ENCODE measurements at regions of chr3 and their contacts with region 1.

Region 1: DNA sequence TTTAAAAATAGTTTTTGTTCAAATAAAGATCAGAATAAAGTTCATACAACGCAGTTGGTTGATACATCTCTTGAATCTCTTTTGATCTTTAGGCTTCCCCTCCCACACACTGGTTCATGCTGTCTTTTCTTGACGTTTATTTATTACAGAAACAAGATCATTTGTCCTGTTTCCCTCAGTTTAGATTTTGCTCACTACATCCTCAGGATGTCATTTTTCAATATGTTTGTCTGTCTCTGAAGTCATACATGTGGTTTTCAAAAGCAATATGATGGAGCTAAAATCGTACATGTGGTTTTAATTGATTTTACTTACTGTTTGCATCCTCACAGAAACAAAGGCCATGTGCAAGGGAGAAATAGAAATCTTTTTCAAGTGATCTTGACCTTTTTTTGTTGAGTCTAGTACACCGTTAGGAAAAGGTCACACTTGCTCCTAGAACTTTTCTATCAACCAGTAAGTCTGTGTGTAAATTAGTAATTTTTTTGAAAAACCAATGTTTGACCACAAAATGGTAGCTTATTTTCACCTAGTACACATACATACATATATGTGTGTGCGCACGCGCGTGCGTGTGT is 63.7 kb upstream of the SENP5 start:
- DNase-seq: peak in 4 of 35 experiments; percentile 7 to 28 (median 10)
- ATAC-seq: peak in 1 of 4 experiments; percentile 88
- H3K4me3 ChIP-seq: no peak overlapping the region
- H3K4me3 Mint-ChIP-seq: no peak overlapping the region
- H3K27ac ChIP-seq: no peak overlapping the region
- H3K27ac Mint-ChIP-seq: peak overlapping the region; percentile 54 to 73
- H3K4me1 ChIP-seq: peaks cover 0 to 12% of the 10 kb centered on the region in 2 experiments
- H3K4me1 Mint-ChIP-seq: peaks cover 13 to 20% (median 18%) of the 10 kb centered on the region in 3 donors
- H3K27me3 ChIP-seq: no peaks in the 10 kb centered on the region
- H3K27me3 Mint-ChIP-seq: no peaks in the 10 kb centered on the region

Region 2: GRCh38 chr3:196323701-196324100 is 480.3 kb before region 1 on chr3:
- CTCF ChIA-PET with region 1: no interaction called
- POLR2A ChIA-PET with region 1: no interaction called
- DNase-seq: no peak
- ATAC-seq: no peak
- H3K4me3 ChIP-seq: no peak overlapping the region
- H3K4me3 Mint-ChIP-seq: no peak overlapping the region
- H3K27ac ChIP-seq: no peak overlapping the region
- H3K27ac Mint-ChIP-seq: no peak overlapping the region
- H3K4me1 ChIP-seq: peaks cover 0 to 6% of the 10 kb centered on the region in 2 experiments
- H3K4me1 Mint-ChIP-seq: peaks cover 0 to 6% (median 3%) of the 10 kb centered on the region in 3 donors
- H3K27me3 ChIP-seq: no peaks in the 10 kb centered on the region
- H3K27me3 Mint-ChIP-seq: peaks cover 0 to 3% of the 10 kb centered on the region in 2 donors

Region 3: DNA sequence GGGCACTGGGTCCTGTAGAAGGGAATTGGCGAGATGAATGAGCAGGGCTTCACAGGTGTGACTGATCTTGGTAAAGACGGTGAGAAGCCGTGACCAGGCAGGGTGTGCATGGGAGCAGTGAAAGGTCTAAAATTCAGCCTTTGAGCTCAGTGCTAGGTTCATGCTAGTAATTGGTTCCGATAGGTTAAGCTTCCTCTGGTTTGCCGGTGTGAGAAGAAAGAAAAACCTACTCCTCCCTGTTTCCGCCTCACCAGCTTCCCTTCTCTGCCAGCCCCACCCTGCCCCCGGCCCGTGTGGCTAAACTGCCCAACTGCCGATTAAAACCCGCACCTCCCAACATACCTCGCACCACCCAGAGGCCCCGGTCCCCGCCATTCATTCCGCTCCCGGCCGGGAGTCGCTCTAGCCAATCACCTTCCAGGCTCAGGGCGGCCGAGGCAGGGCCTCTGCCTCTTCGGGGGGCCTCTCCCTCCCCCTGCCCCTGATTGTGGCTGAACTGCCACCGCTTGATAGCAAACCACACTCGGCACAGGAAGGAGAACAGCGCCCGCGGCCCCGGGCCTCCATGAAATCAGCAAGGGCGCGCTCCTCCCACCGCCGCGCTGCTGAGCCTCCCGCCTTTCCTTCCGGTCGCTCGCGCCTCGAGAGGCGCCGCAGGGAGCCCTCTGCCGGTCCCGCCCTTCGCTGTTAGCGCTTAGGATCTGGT is 171.8 kb before region 1 on chr3:
- CTCF ChIA-PET with region 1: no interaction called
- POLR2A ChIA-PET with region 1: interaction called in 1 of 2 experiments, 10 read pairs
- DNase-seq: peak; percentile 79 to 94 (median 88)
- ATAC-seq: peak; percentile 86 to 89 (median 88)
- H3K4me3 ChIP-seq: peak overlapping the region; percentile 38 to 66
- H3K4me3 Mint-ChIP-seq: peak overlapping the region; percentile 81 to 88 (median 86)
- H3K27ac ChIP-seq: peak overlapping the region; percentile 78
- H3K27ac Mint-ChIP-seq: peak overlapping the region; percentile 95 to 98
- H3K4me1 ChIP-seq: peaks cover 35 to 77% of the 10 kb centered on the region in 2 experiments
- H3K4me1 Mint-ChIP-seq: peaks cover 56 to 64% (median 63%) of the 10 kb centered on the region in 3 donors
- H3K27me3 ChIP-seq: no peaks in the 10 kb centered on the region
- H3K27me3 Mint-ChIP-seq: no peaks in the 10 kb centered on the region

Region 4: DNA sequence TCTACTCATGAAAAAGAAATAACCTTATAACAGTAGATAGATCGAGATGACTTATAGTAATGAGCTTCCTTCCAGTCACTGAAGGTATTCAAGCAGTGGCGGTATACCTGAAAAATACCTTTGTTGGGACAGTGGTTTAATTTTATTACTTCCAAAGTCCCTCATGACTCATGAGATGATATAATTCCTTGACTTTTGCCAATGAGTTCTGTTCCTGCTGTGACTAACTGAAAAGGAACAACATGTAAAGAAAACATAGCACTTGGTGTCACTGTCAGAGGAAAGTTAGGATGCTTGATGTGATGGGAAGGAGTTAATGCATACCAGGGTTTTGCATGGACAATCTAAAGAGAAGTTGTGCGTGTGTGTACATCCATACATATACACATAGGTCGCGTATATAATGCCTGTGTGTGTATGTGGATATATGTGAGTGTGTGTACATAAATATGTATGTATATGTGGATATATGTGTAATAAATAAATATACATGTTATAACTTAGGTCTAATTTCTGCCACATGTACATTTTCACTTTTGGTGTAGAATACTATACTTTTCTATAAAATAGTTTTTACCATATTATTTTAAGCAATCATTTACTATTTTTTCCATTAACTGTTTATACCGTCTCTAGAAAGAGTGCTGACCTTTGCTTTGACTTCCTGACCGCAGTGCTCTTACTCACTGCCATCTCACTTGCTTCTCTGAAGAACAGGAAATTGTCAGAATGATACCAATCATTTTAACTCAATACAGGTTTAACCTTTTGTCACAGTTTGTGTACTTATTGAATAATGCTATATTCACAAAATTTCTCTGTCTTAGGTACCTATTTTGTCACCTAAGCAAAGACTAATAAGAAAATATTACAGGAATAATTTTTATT is 76.9 kb before region 1 on chr3:
- CTCF ChIA-PET with region 1: no interaction called
- POLR2A ChIA-PET with region 1: interaction called in 1 of 2 experiments, 10 read pairs
- DNase-seq: peak in 1 of 35 experiments; percentile 24
- ATAC-seq: peak in 3 of 4 experiments; percentile 69 to 87 (median 70)
- H3K4me3 ChIP-seq: no peak overlapping the region
- H3K4me3 Mint-ChIP-seq: no peak overlapping the region
- H3K27ac ChIP-seq: peak overlapping the region; percentile 0
- H3K27ac Mint-ChIP-seq: peak overlapping the region; percentile 44
- H3K4me1 ChIP-seq: peaks cover 0 to 3% of the 10 kb centered on the region in 2 experiments
- H3K4me1 Mint-ChIP-seq: peaks cover 5 to 29% (median 18%) of the 10 kb centered on the region in 3 donors
- H3K27me3 ChIP-seq: no peaks in the 10 kb centered on the region
- H3K27me3 Mint-ChIP-seq: no peaks in the 10 kb centered on the region

Measured in T-cell (primary cell).